ENCODE measurements at regions of chr6 and their contacts with region 1.

Region 1: DNA sequence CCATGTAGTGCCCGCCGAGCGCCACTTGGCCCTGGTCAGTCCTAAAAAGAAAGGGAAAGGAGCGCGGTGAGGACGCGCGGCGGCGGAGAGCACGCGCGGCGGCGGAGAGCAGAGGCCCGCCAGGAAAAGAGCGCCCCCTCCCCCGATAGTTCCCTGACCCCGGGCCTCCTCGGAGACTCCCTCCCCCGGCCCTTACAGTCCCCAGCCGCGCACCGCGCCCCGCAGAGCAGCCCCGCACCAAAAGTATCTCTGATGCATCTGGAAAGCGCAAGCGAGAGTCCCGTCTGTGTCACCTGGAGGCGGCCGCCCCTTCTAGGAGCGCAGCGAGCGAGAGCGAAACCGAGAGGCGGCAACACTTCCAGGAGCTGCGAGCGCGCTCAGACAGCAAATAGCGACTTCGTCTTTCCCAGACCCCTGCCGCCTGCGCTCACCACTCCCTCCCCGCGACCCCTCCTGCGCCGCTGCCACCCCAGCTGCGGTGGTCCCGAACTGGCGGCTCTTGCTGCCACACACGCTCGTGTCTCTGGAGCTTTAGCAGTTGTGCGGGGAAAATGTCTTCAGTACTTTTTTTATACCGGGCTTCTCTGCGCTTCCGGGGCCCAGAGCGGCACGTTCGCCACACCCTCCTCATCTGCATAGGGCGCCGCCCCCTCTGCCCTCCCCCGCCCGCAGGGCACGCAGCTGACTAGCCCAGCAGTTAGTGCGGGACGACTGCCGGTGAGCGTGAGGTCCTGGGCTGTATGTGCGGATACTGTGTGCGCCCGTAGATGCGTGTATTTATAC is at the start of gene TENT5A:
- DNase-seq: peak; percentile 94 to 96 (median 96)
- ATAC-seq: peak; percentile 83 to 85 (median 84)
- H3K4me3 ChIP-seq: peak within 1 kb of the TSS; percentile 77 to 95 (median 86)
- H3K27ac ChIP-seq: peak within 1 kb of the TSS; percentile 93 to 99 (median 97)
- H3K4me1 ChIP-seq: peaks cover 0 to 36% (median 13%) of the 10 kb centered on the region in 12 donors
- H3K27me3 ChIP-seq: no peaks in the 10 kb centered on the region
- CTCF ChIP-seq: peak in 3 of 12 donors; percentile 22 to 37 (median 35)
- POLR2A ChIP-seq: peak; percentile 30 to 97
- total RNA-seq, gene TENT5A: 25.7 to 47.2 (median 41.4) TPM

Region 2: DNA sequence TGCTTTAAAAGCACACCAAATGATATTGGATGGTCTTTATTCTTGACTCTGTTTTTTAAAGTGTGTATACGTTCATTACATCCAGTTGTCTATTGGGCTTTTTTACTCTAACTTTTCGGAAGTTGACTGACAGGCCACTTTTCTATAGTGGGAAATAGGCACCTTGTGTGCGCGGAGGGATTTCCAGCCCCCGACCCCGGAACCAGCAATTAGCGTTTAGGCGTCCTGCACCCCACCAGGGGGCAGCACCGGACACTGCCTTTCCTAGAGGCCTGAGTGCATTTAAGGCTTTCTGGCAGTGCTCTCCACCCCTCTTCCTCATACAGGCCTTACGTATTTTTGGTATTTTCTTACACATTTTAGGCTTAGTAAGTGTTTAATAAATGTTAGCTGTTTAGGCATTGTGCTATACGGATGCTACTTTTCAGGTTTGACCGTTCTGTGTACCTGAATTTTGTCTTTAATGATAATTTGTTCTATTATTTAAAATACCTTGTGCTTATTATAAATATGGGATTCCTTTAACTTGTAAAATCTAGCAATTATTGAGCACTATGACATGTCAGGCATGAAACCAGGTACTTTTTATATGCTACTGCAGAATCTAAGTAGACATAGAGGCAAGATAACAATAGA is 1414.0 kb before region 1 on chr6:
- intact Hi-C with region 1: loop called in 1 of 10 experiments (anchors 5 kb)
- DNase-seq: peak; percentile 35 to 78 (median 54)
- ATAC-seq: peak in 3 of 4 donors; percentile 74 to 77 (median 76)
- H3K4me3 ChIP-seq: peak overlapping the region in 2 of 12 donors; percentile 14 to 24
- H3K27ac ChIP-seq: no peak overlapping the region
- H3K4me1 ChIP-seq: peaks cover 0 to 6% (median 0%) of the 10 kb centered on the region in 12 donors
- H3K27me3 ChIP-seq: no peaks in the 10 kb centered on the region
- CTCF ChIP-seq: peak; percentile 43 to 83 (median 70)
- POLR2A ChIP-seq: no peak

Region 3: GRCh38 chr6:81451787-81452186 is 300.5 kb before region 1 on chr6:
- intact Hi-C with region 1: loop called in 2 of 10 experiments (anchors 5 to 10 kb)
- DNase-seq: peak in 1 of 5 donors; percentile 28
- ATAC-seq: peak; percentile 84 to 98 (median 92)
- H3K4me3 ChIP-seq: no peak overlapping the region
- H3K27ac ChIP-seq: peak overlapping the region in 1 of 12 donors; percentile 51
- H3K4me1 ChIP-seq: peaks cover 0 to 9% (median 0%) of the 10 kb centered on the region in 12 donors
- H3K27me3 ChIP-seq: no peaks in the 10 kb centered on the region
- CTCF ChIP-seq: no peak
- POLR2A ChIP-seq: no peak

Region 4: DNA sequence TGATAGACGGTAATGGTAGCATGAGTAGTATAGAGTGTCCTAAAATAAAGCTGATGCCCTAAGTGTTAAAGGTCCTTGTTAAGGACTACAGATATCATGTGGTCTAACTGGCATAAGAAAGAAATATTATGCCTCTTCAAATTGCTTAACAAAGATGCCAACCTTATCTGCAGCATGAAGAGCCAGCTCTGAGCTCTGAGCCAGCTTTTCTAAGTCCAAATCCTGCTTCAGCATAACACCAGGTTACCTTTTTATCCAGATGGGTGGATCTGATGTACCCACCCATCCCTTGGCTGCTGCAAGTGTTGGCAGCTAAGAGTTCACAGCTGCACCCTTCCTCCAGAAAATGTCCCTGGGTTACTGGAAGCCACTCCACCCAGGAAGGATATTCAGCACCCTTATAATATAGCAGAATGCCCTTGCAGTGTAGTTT is 83.7 kb before region 1 on chr6:
- intact Hi-C with region 1: loop called in 1 of 10 experiments (anchors 5 kb)
- DNase-seq: peak in 3 of 5 donors; percentile 17 to 61 (median 51)
- ATAC-seq: peak; percentile 70 to 97 (median 90)
- H3K4me3 ChIP-seq: no peak overlapping the region
- H3K27ac ChIP-seq: peak overlapping the region in 8 of 12 donors; percentile 3 to 61 (median 52)
- H3K4me1 ChIP-seq: peaks cover 0 to 19% (median 5%) of the 10 kb centered on the region in 12 donors
- H3K27me3 ChIP-seq: no peaks in the 10 kb centered on the region
- CTCF ChIP-seq: no peak
- POLR2A ChIP-seq: no peak

Region 5: DNA sequence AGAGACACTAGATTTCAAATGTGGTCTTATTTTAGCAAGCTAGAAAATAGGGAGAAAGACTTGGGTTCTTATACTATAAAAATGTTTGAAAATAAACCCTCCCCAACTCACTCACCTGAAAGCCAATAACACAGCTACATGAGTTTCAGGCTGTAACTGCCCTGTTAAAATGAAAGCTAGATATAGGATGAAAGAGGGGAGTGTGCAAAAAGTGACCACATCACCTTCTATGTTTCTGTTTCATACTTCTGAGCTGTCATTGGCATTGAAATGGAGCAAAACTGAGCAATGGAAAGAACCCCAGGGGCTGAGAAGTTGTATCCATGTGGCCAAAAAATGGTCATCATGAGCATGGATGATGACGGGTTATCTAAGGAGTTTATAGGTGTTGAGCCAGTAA is 148.3 kb after region 1 on chr6:
- intact Hi-C with region 1: loop called in 7 of 10 experiments (anchors 1 to 5 kb)
- DNase-seq: no peak
- ATAC-seq: no peak
- H3K4me3 ChIP-seq: no peak overlapping the region
- H3K27ac ChIP-seq: peak overlapping the region in 7 of 12 donors; percentile 17 to 89 (median 48)
- H3K4me1 ChIP-seq: peaks cover 0 to 45% (median 13%) of the 10 kb centered on the region in 12 donors
- H3K27me3 ChIP-seq: no peaks in the 10 kb centered on the region
- CTCF ChIP-seq: no peak
- POLR2A ChIP-seq: no peak

Region 6: DNA sequence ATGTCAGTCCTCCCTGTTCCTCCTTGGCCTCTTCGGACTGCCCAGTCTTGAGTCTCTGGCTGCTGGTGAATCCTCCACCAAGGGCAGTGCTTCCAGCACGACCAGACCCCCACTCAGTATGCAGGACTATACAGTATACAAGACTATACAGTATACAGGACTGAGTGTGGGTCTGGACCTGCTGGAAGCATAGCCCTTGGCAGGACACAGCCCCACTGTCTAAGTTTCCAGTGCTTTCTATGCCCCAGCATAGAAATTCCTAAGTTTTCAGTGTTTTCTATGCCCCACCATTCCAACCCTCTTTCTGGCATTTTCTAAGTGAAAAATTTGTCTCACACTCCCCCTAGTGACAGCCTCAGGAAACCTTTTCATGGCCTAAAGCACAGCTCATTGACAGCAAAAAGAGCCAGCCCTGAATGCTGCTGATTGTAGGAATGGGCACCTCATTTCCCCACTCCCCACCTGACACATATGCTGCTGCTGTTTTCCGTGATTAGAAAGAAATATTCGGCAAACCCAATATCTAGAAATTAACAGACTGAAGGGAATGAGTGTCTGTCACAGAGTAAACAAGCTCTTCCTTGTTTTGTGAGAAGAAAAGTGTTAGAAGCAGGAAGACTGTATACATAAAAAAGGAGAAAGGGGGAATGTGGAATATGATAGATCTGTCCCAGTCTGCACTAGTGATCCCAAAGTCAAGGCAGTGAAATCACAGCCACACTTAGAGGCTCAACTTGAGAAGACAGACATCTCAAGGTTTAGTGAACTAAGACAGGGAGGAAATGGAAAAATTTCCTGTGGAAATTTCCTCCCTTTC is 288.3 kb after region 1 on chr6:
- intact Hi-C with region 1: loop called in 7 of 10 experiments (anchors 5 to 10 kb)
- DNase-seq: peak in 2 of 5 donors; percentile 31
- ATAC-seq: peak; percentile 38 to 84 (median 76)
- H3K4me3 ChIP-seq: no peak overlapping the region
- H3K27ac ChIP-seq: peak overlapping the region in 3 of 12 donors; percentile 3 to 48 (median 17)
- H3K4me1 ChIP-seq: peaks cover 0 to 16% (median 0%) of the 10 kb centered on the region in 12 donors
- H3K27me3 ChIP-seq: no peaks in the 10 kb centered on the region
- CTCF ChIP-seq: peak; percentile 45 to 77 (median 64)
- POLR2A ChIP-seq: no peak